ENCODE measurements at regions of chr6 and their contacts with region 1.

Region 1: GRCh38 chr6:139375232-139376016 is 976 bp upstream of the CITED2 start:
- DNase-seq: peak; percentile 95
- ATAC-seq: peak; percentile 84

Region 2: DNA sequence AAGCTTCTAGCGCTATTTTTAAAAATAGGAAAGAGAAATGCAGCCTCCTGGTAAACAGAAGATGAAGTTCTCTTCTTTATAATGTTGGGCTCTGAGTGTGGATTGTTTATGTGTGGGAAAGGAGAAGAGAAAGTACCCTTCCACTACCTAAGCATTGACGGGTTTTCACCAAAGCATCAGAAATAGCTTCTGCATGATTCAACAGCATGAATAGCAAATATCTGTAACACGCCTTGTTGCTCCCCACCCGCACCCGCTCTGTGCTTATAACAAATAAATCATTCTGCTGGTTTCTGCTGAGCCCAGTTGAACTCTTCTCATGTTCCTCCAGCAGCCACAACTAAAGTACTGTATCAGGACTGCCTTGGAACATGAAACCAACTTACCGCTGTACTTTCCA is 104.4 kb before region 1 on chr6:
- intact Hi-C with region 1: no loop called
- DNase-seq: no peak
- ATAC-seq: peak; percentile 31

Region 3: GRCh38 chr6:139510040-139510790 is 134.8 kb after region 1 on chr6:
- intact Hi-C with region 1: loop called (anchors 2 kb)
- DNase-seq: peak; percentile 54
- ATAC-seq: peak; percentile 96

Region 4: GRCh38 chr6:139753198-139753861 is 377.9 kb after region 1 on chr6:
- intact Hi-C with region 1: loop called (anchors 2 kb)
- DNase-seq: no peak
- ATAC-seq: no peak

Region 5: DNA sequence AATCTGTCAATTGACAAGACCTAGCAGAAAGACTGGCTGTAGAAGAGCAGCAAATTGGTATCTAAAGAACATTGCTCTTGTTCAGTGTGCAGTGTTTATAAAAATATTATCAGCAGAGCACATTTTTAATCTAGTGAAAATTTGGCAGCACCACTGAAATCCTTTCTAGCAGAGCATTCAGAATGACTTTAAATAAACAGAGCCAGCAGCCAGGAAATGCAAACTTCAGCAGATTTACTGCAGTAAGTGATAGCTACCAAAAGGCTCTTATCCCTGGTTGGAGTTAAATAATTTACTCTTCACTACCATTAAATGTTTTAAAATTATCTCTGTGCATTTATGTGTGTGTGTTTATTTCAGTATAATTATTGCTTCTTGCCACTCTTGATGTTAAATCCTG is 590.0 kb after region 1 on chr6:
- intact Hi-C with region 1: loop called (anchors 5 kb)
- DNase-seq: no peak
- ATAC-seq: peak; percentile 50

Region 6: GRCh38 chr6:140203661-140204147 is 828.3 kb after region 1 on chr6:
- intact Hi-C with region 1: loop called (anchors 10 kb)
- DNase-seq: no peak
- ATAC-seq: no peak

Region 7: DNA sequence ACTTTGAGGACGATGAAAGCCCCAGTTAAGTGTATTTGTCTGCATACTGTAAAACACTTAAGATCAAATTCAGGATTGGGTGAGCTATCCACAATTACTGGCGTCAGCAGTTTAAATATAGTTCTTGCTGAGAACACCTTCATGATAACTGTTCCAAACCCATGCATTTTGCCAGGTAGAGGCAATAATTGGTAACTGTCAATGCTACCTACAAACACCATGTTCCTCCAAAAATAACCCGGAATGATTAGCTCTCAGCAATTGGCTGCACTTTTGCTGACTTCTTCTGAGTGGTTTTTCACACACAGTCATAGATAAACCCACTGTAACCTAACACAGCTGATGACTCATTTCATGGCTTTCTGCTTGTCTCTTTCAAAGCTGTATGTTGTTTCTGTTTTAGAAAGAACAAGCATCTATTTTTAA is 1398.7 kb after region 1 on chr6:
- intact Hi-C with region 1: loop called (anchors 10 kb)
- DNase-seq: no peak
- ATAC-seq: peak; percentile 95

Region 8: GRCh38 chr6:141169419-141169818 is 1794.0 kb after region 1 on chr6:
- intact Hi-C with region 1: loop called (anchors 10 kb)
- DNase-seq: no peak
- ATAC-seq: no peak